ENCODE measurements at regions of chr6 and their contacts with region 1.

Region 1: GRCh38 chr6:51855310-51856082 is 231.9 kb downstream of the PKHD1 start:
- DNase-seq: peak; percentile 61
- CTCF ChIP-seq: peak; percentile 75

Region 2: DNA sequence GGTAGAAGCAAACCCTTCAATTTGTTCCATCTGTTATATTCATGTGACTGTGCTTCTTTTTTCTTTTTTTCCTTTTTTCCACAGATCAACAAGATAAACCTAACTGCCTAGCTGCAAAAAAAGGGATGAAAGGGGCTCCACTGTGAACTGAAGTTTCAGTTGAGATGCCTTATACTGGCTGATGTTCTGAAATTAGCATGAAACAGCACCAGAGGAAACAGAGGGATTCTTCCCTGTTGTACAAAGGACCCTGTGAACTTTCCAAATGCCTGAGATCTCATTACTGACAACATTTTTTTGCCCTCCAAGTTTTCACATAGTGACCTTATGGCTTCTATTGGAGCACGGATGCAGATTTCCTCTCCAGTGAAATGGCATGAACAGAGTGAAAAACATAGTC is 1444.9 kb before region 1 on chr6:
- in situ Hi-C with region 1: no loop called
- DNase-seq: no peak
- CTCF ChIP-seq: no peak

Region 3: DNA sequence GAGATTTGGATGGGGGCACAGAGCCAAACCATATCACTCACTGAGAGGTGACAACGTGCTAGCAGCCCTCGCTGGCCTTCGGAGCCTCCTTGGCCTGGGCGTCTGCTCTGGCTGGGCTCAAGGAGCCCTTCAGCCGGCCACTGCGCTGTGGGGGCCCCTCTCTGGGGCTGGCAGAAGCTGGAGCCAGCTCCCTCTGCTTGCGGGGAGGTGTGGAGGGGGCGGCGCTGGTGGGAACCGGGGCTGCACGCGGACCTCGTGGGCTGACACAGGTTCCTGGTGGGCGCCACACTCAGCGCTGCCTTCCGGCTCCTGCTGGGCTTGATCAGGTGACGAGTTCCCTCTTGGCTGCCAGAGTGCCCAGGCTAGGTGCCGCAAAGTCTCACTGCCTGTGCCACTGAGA is 257.3 kb before region 1 on chr6:
- in situ Hi-C with region 1: no loop called
- DNase-seq: no peak
- CTCF ChIP-seq: no peak

Region 4: DNA sequence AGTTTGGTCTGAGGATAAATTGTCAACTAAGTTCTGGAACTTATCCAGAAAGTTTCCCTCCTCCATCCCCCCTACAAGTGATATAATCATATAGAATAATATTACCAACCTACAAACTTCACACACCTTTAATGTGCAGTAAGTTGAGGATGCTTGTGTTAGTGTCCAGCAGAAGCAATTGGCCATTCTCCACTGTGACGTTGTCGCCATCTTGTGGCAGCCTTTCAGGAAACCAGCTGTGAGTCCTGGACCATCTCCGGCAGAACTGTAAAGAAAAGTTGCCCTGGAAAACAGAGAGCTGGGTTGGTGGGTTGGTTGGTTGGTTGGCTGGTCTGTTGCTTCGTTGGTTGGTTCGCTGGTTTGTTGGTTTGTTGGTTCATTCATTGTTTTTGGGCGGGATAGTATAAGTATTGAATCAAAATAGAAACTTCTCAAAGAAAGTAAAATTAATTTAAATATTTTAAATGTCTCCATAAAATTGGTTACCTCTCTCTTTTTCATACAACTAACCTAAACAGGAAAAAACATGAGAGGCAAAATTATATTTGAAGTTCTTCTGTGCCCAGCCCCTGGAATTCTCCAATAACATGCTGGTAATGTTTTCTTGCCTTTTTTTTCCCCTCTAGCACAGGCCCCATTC is 104.4 kb after region 1 on chr6:
- in situ Hi-C with region 1: loop called (anchors 10 kb)
- DNase-seq: peak; percentile 32
- CTCF ChIP-seq: peak; percentile 89